Dorsolateral prefrontal cortex (tissue), 120 donors: ENCODE measurements at regions of chr6 and their contacts with region 1.

Region 1: GRCh38 chr6:15366003-15366535 is 120.2 kb downstream of the JARID2 start:
- DNase-seq: no peak
- H3K4me3 ChIP-seq: peak overlapping the region in 22 of 59 donors; percentile 4 to 60 (median 40)
- H3K27ac ChIP-seq: peak overlapping the region in 11 of 59 donors; percentile 9 to 73 (median 47)
- H3K27me3 ChIP-seq: no peaks in the 10 kb centered on the region
- CTCF ChIP-seq: no peak

Region 2: DNA sequence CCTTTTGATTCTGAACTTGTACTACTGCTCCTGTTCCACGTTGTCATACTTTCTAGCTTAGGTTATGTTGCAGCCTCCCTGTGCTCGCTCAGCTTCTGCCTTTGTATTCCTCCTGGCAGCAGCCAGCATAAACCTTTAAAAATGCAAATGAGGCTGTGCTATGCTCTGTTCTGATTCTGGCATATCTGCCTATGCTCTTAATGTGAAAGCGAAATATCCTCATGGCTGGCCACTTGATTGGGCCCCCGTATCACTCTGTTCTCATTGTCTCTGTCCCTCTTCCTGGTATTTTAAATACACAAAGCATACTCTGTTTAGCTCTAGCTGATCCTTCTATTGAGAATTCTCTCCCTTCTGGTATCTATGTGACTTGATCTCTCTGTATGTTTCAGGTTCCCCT is 18.8 kb after region 1 on chr6:
- intact Hi-C with region 1: loop called in 1 of 2 experiments (anchors 2 kb)
- DNase-seq: no peak
- H3K4me3 ChIP-seq: peak overlapping the region in 25 of 59 donors; percentile 1 to 39 (median 23)
- H3K27ac ChIP-seq: peak overlapping the region in 2 of 59 donors; percentile 28
- H3K27me3 ChIP-seq: no peaks in the 10 kb centered on the region
- CTCF ChIP-seq: no peak

Region 3: GRCh38 chr6:15420959-15421438 is 54.9 kb after region 1 on chr6:
- intact Hi-C with region 1: no loop called
- DNase-seq: no peak
- H3K4me3 ChIP-seq: no peak overlapping the region
- H3K27ac ChIP-seq: peak overlapping the region in 3 of 59 donors; percentile 9 to 55 (median 27)
- H3K27me3 ChIP-seq: no peaks in the 10 kb centered on the region
- CTCF ChIP-seq: no peak